ENCODE measurements at regions of chr1 and their contacts with region 1.

Region 1: DNA sequence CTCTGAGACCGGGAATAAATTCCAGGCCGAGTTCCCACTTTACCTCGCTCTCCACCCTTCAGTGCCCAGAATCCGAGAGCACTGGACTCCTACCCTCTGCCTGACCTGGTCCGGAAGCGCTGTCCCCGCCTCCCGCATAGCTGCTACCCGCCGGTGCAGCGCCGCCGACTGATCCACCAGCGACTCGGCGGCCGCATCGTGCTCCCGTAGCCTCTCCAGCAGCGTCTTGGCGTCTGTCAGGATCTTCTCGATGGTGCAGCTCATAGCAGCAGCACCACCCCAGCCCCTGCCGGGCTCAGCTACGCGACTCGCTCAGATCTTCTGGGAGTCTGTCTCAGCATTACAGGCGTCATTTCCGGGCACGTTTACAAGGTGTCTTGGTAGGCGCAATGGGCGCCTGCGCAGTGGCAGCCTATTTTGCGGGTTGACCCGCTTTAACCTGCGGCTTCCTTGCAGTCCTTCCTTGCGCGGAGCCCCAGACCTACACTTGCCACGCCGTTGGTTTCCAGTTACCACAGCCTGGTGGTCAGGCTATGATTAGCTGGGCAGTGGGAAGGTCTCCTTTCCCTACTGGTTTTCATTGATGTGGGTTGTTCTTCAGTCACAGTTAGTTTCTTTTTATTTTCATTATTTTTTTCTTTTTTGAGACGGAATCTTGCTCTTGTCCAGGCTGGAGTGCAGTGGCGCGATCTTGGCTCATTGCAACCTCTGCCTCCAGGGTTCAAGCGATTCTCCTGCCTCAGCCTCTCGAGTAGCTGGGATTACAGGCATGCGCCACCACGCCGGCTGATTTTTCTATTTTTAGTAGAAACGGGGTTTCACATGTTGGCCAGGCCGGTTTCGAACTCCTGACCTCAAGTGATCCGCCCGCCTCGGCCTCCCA is at the start of gene SIKE1:
- DNase-seq: peak; percentile 91 to 95
- H3K4me3 ChIP-seq: peak within 1 kb of the TSS; percentile 56
- H3K4me3 Mint-ChIP-seq: peak within 1 kb of the TSS; percentile 100
- H3K27ac Mint-ChIP-seq: peak within 1 kb of the TSS; percentile 100
- H3K4me1 ChIP-seq: 0 out of 2 replicates have a peak, but pooled peaks cover 2% of the 10 kb centered on the region
- H3K4me1 Mint-ChIP-seq: no peaks in the 10 kb centered on the region
- H3K27me3 ChIP-seq: no peaks in the 10 kb centered on the region
- H3K27me3 Mint-ChIP-seq: no peaks in the 10 kb centered on the region
- CTCF ChIP-seq: no peak
- total RNA-seq, gene SIKE1: 41.9 and 47.7 TPM in 2 replicates

Region 2: GRCh38 chr1:114685851-114686534 is 94.6 kb before region 1 on chr1:
- CTCF ChIA-PET with region 1: no interaction called
- POLR2A ChIA-PET with region 1: no interaction called
- intact Hi-C with region 1: no loop called
- DNase-seq: no peak
- H3K4me3 ChIP-seq: no peak overlapping the region
- H3K4me3 Mint-ChIP-seq: no peak overlapping the region
- H3K27ac Mint-ChIP-seq: no peak overlapping the region
- H3K4me1 ChIP-seq: no peaks in the 10 kb centered on the region
- H3K4me1 Mint-ChIP-seq: no peaks in the 10 kb centered on the region
- H3K27me3 ChIP-seq: no peaks in the 10 kb centered on the region
- H3K27me3 Mint-ChIP-seq: peaks cover 16% of the 10 kb centered on the region
- CTCF ChIP-seq: no peak

Region 3: DNA sequence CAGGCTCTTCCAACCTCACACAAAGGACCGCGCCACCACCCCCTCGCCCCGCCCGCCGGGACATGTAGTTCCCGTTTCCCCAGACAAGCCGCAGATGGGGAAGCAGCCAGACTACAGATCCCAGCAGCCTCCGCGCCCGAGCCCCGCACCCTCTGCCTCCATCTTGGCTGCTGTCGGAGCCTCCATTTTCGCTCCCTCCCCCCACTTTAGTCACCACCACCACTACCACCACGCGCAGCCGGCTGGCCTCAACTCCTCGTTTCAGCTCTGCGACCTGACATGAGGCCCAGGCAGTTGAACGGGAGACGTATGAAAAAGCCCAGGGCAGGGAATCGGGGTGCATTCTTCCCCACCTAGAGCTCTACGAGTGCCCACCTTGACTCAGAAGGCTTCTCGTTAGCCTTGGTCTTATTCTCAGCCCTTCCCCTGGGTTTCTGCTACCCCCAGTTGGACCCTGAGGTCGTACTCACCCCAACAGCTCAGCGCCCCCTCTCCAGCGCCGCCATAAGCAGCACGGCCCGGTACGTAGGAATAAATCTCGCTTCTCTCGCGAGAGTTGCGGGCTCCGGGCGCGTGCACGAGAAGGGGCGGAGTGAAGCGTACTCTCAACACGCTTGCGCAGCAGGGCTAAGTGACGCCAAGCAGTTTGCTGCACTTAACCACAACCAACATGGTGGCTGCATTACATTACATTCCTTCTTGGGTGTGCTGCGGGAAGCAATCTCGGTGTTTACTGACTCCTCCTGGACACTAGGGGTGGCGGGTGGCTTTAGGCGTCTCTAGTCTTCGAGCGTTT is 22.9 kb before region 1 on chr1 and contains the start of gene CSDE1:
- CTCF ChIA-PET with region 1: interaction called, 3 read pairs
- POLR2A ChIA-PET with region 1: interaction called, 4 read pairs
- intact Hi-C with region 1: loop called (anchors 1 kb)
- DNase-seq: peak; percentile 92 to 95
- H3K4me3 ChIP-seq: peak within 1 kb of the TSS; percentile 87
- H3K4me3 Mint-ChIP-seq: peak within 1 kb of the TSS; percentile 94
- H3K27ac Mint-ChIP-seq: peak within 1 kb of the TSS; percentile 100
- H3K4me1 ChIP-seq: peaks cover 19% of the 10 kb centered on the region
- H3K4me1 Mint-ChIP-seq: no peaks in the 10 kb centered on the region
- H3K27me3 ChIP-seq: no peaks in the 10 kb centered on the region
- H3K27me3 Mint-ChIP-seq: no peaks in the 10 kb centered on the region
- CTCF ChIP-seq: peak in 1 of 2 experiments; percentile 55
- total RNA-seq, gene CSDE1: 380 and 403 TPM in 2 replicates

Measured in Caco-2 (cell line).